ENCODE measurements at regions of chr3 and their contacts with region 1.

Region 1: GRCh38 chr3:81242871-81243270 is 518.6 kb downstream of the GBE1 start:
- DNase-seq: peak; percentile 52
- H3K4me3 Mint-ChIP-seq: no peak overlapping the region
- H3K27ac Mint-ChIP-seq: no peak overlapping the region
- H3K4me1 Mint-ChIP-seq: no peaks in the 10 kb centered on the region
- H3K27me3 Mint-ChIP-seq: peaks cover 65% of the 10 kb centered on the region
- CTCF ChIP-seq: peak; percentile 46

Region 2: GRCh38 chr3:80785470-80785869 is 457.4 kb before region 1 on chr3:
- CTCF ChIA-PET with region 1: no interaction called
- POLR2A ChIA-PET with region 1: no interaction called
- intact Hi-C with region 1: loop called (anchors 1 kb)
- DNase-seq: peak; percentile 42
- H3K4me3 Mint-ChIP-seq: no peak overlapping the region
- H3K27ac Mint-ChIP-seq: no peak overlapping the region
- H3K4me1 Mint-ChIP-seq: no peaks in the 10 kb centered on the region
- H3K27me3 Mint-ChIP-seq: peaks cover 11% of the 10 kb centered on the region
- CTCF ChIP-seq: no peak

Region 3: DNA sequence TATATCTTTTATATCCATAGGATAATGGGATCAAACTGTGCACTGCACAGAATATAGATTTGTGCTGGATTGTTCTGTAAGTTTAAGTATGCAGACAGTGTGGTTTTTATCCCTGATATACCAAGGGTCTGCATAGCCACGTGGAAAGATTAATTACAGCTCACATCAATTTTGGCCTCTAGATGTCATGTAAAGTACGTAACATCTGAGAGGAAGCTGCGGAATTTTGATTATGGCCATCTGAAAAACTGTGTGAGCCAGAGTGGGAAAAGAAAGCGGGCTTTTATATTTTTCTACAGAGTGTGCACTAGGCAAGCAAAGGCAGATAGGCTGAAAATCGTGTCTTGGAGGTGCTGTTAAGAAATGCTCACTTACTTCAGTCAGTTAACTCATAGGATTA is 44.1 kb before region 1 on chr3:
- CTCF ChIA-PET with region 1: no interaction called
- POLR2A ChIA-PET with region 1: no interaction called
- intact Hi-C with region 1: loop called (anchors 2 kb)
- DNase-seq: no peak
- H3K4me3 Mint-ChIP-seq: no peak overlapping the region
- H3K27ac Mint-ChIP-seq: no peak overlapping the region
- H3K4me1 Mint-ChIP-seq: no peaks in the 10 kb centered on the region
- H3K27me3 Mint-ChIP-seq: peaks cover 61% of the 10 kb centered on the region
- CTCF ChIP-seq: no peak